Activated T-helper 2 cell treated with anti-CD3 and anti-CD28 coated beads, Interferon-gamma antibody, Interleukin-2, Interleukin-4, amounts not matched to agents 10 μg/mL and 5 μg/mL and 100 μg/mL, durations not matched to agents 14 hours and 24 hours and 36 hours (primary cell): ENCODE measurements at regions of chr17 and their contacts with region 1.

Region 1: GRCh38 chr17:46056800-46057304 is 57.8 kb downstream of the STH start:
- DNase-seq: no peak
- H3K4me3 Mint-ChIP-seq: no peak overlapping the region
- H3K27ac Mint-ChIP-seq: peak overlapping the region; percentile 78
- H3K4me1 Mint-ChIP-seq: peaks cover 44% of the 10 kb centered on the region
- H3K27me3 Mint-ChIP-seq: no peaks in the 10 kb centered on the region

Region 2: DNA sequence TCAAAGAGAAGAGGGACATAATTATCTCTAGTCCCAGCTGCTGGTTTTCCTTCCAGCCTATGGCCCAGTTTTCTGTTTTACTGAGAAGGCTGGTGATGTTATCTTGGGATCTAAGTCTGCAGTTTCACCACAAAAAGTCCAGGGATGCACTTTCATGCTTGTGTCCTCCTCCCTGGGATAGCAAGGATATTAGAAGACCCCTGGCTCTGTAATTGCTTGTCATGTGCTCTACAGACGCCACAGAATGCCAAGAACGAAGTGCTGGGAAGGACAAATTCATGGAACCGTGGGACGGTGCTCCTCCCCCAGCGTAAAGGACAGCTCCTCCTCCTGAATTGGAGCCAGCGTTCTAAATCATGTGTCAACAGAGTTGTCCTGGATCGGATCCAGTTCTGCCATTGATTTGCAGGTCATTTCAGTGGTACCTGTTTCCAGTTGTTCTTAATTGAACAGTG is 153.9 kb before region 1 on chr17:
- intact Hi-C with region 1: loop called (anchors 10 kb)
- DNase-seq: no peak
- H3K4me3 Mint-ChIP-seq: no peak overlapping the region
- H3K27ac Mint-ChIP-seq: no peak overlapping the region
- H3K4me1 Mint-ChIP-seq: peaks cover 17% of the 10 kb centered on the region
- H3K27me3 Mint-ChIP-seq: peaks cover 35% of the 10 kb centered on the region

Region 3: DNA sequence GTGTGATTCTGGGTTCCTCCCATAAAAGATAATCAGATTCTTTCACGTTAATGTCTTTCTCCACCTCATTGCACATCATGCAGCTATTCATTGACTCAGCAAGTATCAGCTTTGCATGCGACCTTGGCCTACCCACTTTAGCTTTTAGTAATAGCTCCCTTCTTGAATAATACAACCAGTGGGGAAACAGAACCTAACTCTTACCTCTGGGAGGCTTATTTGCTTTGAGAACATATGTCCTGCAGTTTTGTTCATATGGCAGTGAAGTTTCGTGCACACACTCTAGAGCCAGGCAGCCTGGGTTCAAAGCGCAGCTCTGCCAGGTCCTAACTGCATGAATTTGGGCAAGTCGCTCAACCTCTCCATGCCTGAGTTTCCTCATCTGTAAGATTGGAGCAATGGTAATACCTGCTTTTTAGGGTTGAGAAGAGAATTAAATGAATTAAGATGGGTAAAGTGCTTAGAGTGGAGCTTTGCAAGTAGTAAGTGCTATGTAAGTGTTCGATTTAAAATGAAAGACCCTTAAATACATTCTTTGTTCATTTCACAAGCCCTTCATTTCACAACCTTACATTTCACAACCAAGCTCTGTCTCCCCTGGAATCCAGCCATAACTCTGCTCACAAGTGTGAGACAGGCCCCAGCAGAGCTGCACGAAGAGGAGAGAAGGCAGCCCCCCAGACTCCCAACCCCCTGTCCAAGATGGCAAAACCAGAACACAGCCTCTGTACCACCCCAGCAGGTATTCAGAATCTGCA is 133.2 kb before region 1 on chr17:
- intact Hi-C with region 1: no loop called
- DNase-seq: no peak
- H3K4me3 Mint-ChIP-seq: no peak overlapping the region
- H3K27ac Mint-ChIP-seq: no peak overlapping the region
- H3K4me1 Mint-ChIP-seq: no peaks in the 10 kb centered on the region
- H3K27me3 Mint-ChIP-seq: peaks cover 6% of the 10 kb centered on the region

Region 4: GRCh38 chr17:46035112-46035818 is 21.6 kb before region 1 on chr17:
- intact Hi-C with region 1: loop called (anchors 1 kb)
- DNase-seq: no peak
- H3K4me3 Mint-ChIP-seq: no peak overlapping the region
- H3K27ac Mint-ChIP-seq: peak overlapping the region; percentile 59
- H3K4me1 Mint-ChIP-seq: peaks cover 18% of the 10 kb centered on the region
- H3K27me3 Mint-ChIP-seq: no peaks in the 10 kb centered on the region

Region 5: DNA sequence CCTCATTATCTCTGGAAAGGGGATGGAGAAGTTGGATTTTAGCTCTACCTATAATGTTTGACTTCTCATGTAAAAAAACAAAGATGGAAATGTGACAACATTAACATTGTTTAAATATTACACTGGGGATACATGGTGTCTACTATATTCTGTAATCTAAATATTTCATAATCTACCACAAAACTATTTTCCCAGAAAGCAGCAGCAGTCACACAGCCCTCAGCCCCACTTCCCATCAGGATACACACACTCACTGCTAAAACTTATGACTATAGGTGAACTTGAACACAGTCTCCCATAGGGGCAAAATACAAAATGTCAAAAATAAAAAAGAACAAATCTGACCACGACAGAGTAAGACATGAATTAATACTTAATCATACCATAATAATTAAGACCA is 40.6 kb after region 1 on chr17:
- intact Hi-C with region 1: loop called (anchors 2 kb)
- DNase-seq: no peak
- H3K4me3 Mint-ChIP-seq: no peak overlapping the region
- H3K27ac Mint-ChIP-seq: no peak overlapping the region
- H3K4me1 Mint-ChIP-seq: peaks cover 36% of the 10 kb centered on the region
- H3K27me3 Mint-ChIP-seq: no peaks in the 10 kb centered on the region

Region 6: GRCh38 chr17:46266656-46267544 is 210.0 kb after region 1 on chr17:
- intact Hi-C with region 1: no loop called
- DNase-seq: peak; percentile 84
- H3K4me3 Mint-ChIP-seq: peak overlapping the region; percentile 82
- H3K27ac Mint-ChIP-seq: peak overlapping the region; percentile 61
- H3K4me1 Mint-ChIP-seq: peaks cover 37% of the 10 kb centered on the region
- H3K27me3 Mint-ChIP-seq: peaks cover 37% of the 10 kb centered on the region